CD4-positive, alpha-beta T cell (primary cell): ENCODE measurements at regions of chr9 and their contacts with region 1.

Region 1: GRCh38 chr9:133087429-133088145 is 25.8 kb downstream of the CEL start:
- DNase-seq: no peak
- ATAC-seq: no peak
- H3K4me3 ChIP-seq: no peak overlapping the region
- H3K4me3 Mint-ChIP-seq: no peak overlapping the region
- H3K27ac ChIP-seq: no peak overlapping the region
- H3K27ac Mint-ChIP-seq: no peak overlapping the region
- H3K4me1 ChIP-seq: no peaks in the 10 kb centered on the region
- H3K4me1 Mint-ChIP-seq: no peaks in the 10 kb centered on the region
- H3K27me3 ChIP-seq: no peaks in the 10 kb centered on the region
- H3K27me3 Mint-ChIP-seq: no peaks in the 10 kb centered on the region
- CTCF ChIP-seq: no peak

Region 2: DNA sequence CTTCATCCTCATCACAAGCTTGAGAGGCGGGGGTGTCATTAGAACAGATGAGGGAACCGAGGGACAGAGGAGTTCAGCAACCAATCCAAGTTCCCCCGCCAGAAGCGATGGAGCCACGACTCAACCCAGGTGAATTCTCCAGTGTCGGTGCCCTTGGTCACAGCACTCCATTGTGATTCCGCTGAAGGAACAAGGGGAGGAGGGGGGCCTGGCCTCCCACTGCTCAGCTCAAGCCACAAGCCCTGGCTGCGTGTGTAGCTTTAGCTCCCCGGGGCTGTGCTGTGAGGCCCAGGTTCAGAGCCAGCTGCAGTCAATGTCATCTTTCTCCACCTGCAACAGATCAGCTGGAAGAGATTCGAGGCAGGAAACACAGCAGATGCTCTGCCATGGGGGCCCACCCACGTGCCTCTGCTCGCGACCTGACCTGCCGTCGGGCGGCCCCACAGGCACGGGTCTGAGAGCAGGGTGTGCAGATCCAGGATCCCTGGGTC is 344.7 kb before region 1 on chr9:
- CTCF ChIA-PET with region 1: no interaction called
- POLR2A ChIA-PET with region 1: no interaction called
- intact Hi-C with region 1: no loop called
- DNase-seq: no peak
- ATAC-seq: no peak
- H3K4me3 ChIP-seq: no peak overlapping the region
- H3K4me3 Mint-ChIP-seq: no peak overlapping the region
- H3K27ac ChIP-seq: no peak overlapping the region
- H3K27ac Mint-ChIP-seq: no peak overlapping the region
- H3K4me1 ChIP-seq: no peaks in the 10 kb centered on the region
- H3K4me1 Mint-ChIP-seq: no peaks in the 10 kb centered on the region
- H3K27me3 ChIP-seq: peaks cover 42 to 50% of the 10 kb centered on the region in 2 experiments
- H3K27me3 Mint-ChIP-seq: peaks cover 61% of the 10 kb centered on the region
- CTCF ChIP-seq: no peak

Region 3: GRCh38 chr9:133067821-133068220 is 19.8 kb before region 1 on chr9:
- CTCF ChIA-PET with region 1: no interaction called
- POLR2A ChIA-PET with region 1: no interaction called
- intact Hi-C with region 1: loop called in 1 of 2 experiments (anchors 2 kb)
- DNase-seq: no peak
- ATAC-seq: no peak
- H3K4me3 ChIP-seq: no peak overlapping the region
- H3K4me3 Mint-ChIP-seq: no peak overlapping the region
- H3K27ac ChIP-seq: no peak overlapping the region
- H3K27ac Mint-ChIP-seq: no peak overlapping the region
- H3K4me1 ChIP-seq: no peaks in the 10 kb centered on the region
- H3K4me1 Mint-ChIP-seq: no peaks in the 10 kb centered on the region
- H3K27me3 ChIP-seq: no peaks in the 10 kb centered on the region
- H3K27me3 Mint-ChIP-seq: no peaks in the 10 kb centered on the region
- CTCF ChIP-seq: no peak